ENCODE measurements at regions of chr18 and their contacts with region 1.

Region 1: DNA sequence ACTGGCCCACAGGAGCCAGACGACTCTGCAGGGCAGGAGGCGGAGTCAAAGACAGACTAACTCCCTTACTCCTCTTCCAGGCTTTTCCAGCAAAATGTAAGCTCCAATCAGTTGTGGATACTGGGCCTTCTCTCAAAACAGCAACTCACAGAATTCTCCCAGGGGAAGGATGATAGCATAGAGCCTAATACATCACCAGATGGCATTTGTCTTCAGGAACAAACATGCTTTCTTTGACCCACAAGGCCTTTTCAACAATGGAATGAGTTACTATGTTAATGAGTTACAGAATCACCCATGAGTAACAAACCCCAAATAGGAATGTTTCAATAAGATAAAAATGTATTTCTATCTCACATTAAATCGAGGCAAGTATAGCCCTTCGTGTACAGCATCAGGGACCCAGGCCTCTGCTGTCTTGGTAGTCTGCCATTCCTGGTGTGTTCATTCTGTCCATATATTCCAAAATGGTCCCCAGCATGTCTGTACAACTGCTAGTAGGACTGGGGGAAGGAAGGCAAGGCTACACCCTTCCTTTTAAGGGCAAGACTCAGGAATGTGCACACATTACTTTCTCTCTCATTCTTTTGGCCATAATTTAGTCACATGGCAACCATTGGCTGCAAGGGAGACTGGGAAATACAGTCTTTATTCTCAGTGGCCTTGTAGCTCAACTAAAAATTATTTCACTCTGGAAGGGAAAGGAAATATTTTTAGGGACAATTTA is 76.4 kb downstream of the BOD1L2 start:
- DNase-seq: peak; percentile 50
- H3K4me3 Mint-ChIP-seq: peak overlapping the region; percentile 7
- H3K27ac Mint-ChIP-seq: peak overlapping the region; percentile 82
- H3K4me1 Mint-ChIP-seq: peaks cover 34% of the 10 kb centered on the region
- H3K27me3 Mint-ChIP-seq: no peaks in the 10 kb centered on the region
- CTCF ChIP-seq: no peak

Region 2: GRCh38 chr18:57051657-57052044 is 171.7 kb before region 1 on chr18:
- CTCF ChIA-PET with region 1: interaction called, 6 read pairs
- intact Hi-C with region 1: loop called (anchors 5 kb)
- DNase-seq: peak; percentile 59
- H3K4me3 Mint-ChIP-seq: no peak overlapping the region
- H3K27ac Mint-ChIP-seq: peak overlapping the region; percentile 95
- H3K4me1 Mint-ChIP-seq: peaks cover 30% of the 10 kb centered on the region
- H3K27me3 Mint-ChIP-seq: no peaks in the 10 kb centered on the region
- CTCF ChIP-seq: no peak

Region 3: DNA sequence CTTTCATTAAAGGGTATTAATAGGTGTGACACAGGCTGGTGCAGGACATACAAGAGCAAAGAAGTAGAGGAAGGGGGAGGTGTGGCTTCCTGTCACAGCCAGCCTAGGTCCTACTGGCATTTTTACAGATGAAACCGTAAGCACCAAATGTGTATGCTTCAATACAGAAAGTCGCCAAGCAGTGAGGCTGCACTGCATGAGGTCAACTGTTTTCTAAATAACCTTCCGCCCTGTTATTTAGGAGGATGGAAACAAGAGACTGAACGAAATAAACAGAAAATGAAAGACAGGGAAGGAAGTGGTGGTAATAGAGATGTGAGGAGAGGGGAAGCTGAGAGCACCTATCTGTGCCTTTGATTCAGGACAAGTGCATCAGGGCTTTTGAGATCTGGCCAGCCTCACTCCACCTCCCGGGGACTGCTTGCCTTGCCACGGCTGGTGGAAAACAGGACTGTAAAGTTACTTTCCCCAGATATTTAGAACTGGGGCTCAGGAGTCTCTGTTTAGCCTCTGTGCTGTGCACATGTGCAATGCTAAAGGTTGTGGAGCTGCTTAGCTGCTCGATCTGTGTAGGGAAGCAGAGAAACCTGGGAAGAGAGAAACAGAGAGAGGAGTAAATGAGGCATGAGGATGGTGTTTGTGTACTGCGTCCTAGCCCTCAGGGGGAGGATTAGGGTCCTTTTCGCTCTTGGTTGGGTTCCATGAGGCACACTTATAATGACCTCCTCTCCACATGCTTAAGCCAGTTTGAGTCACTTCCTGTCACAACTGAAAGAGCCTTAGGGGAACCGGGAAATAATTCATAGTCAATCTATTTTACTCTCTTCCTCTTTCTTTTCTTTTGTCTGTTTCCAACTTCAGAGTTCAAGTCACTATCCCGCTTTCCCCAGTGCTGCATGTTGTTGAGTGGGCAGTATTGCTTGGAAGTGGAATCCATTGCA is 138.7 kb before region 1 on chr18:
- CTCF ChIA-PET with region 1: interaction called, 4 read pairs
- intact Hi-C with region 1: loop called (anchors 5 kb)
- DNase-seq: peak; percentile 13
- H3K4me3 Mint-ChIP-seq: peak overlapping the region; percentile 34
- H3K27ac Mint-ChIP-seq: peak overlapping the region; percentile 28
- H3K4me1 Mint-ChIP-seq: peaks cover 58% of the 10 kb centered on the region
- H3K27me3 Mint-ChIP-seq: no peaks in the 10 kb centered on the region
- CTCF ChIP-seq: no peak

Region 4: DNA sequence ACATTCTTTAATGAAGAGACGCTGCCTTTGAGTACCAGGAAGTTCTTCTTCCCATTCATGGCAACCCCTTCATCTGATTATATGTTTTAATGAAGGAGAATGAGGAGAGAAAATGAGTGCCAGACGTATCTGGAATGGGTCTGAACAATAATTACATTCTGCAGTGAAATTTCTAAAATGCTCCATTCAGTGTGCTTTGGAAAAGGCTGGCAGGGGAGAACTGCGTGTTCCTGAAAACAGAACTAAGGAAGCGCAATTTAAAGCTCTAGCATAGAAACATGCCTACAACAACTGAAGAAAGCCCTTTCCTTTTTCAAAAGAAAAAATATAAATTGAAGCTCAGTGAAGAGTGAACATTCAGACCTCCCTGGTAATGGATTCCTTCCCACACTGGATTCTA is 17.7 kb before region 1 on chr18:
- CTCF ChIA-PET with region 1: no interaction called
- intact Hi-C with region 1: no loop called
- DNase-seq: no peak
- H3K4me3 Mint-ChIP-seq: no peak overlapping the region
- H3K27ac Mint-ChIP-seq: no peak overlapping the region
- H3K4me1 Mint-ChIP-seq: peaks cover 36% of the 10 kb centered on the region
- H3K27me3 Mint-ChIP-seq: no peaks in the 10 kb centered on the region
- CTCF ChIP-seq: no peak

Region 5: DNA sequence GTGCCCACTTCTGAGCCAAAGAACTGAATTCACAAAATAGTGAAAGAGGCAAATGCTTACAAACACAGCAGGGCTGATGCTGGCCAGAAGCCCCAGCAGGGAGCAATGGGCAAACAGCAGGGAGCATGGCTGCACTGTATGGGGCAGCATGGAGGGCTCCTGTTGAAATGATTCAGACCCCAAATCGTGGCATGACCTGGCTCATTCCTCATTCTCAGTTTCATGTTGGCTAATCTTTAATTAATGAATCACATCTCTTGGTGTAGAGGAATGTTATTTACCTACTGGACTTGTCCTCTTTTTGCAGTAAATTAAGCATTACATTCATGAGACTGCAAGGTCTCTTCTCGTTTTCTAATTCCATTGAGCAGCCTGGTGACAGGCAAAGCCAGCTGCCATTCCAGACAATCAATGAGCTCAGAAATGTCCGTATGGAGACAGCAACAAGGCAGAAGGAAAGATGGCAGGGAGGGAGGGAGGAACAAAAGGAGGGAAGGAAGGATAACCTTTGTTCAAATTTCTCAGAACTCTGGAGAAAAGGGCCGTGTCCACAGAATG is 44.1 kb after region 1 on chr18:
- CTCF ChIA-PET with region 1: no interaction called
- intact Hi-C with region 1: loop called (anchors 2 kb)
- DNase-seq: peak; percentile 55
- H3K4me3 Mint-ChIP-seq: peak overlapping the region; percentile 29
- H3K27ac Mint-ChIP-seq: peak overlapping the region; percentile 97
- H3K4me1 Mint-ChIP-seq: peaks cover 68% of the 10 kb centered on the region
- H3K27me3 Mint-ChIP-seq: no peaks in the 10 kb centered on the region
- CTCF ChIP-seq: no peak

Measured in Calu3 (cell line).